Activated CD4-positive, alpha-beta T cell treated with anti-CD3 and anti-CD28 coated beads for 36 hours (primary cell): ENCODE measurements at regions of chr6 and their contacts with region 1.

Region 1: DNA sequence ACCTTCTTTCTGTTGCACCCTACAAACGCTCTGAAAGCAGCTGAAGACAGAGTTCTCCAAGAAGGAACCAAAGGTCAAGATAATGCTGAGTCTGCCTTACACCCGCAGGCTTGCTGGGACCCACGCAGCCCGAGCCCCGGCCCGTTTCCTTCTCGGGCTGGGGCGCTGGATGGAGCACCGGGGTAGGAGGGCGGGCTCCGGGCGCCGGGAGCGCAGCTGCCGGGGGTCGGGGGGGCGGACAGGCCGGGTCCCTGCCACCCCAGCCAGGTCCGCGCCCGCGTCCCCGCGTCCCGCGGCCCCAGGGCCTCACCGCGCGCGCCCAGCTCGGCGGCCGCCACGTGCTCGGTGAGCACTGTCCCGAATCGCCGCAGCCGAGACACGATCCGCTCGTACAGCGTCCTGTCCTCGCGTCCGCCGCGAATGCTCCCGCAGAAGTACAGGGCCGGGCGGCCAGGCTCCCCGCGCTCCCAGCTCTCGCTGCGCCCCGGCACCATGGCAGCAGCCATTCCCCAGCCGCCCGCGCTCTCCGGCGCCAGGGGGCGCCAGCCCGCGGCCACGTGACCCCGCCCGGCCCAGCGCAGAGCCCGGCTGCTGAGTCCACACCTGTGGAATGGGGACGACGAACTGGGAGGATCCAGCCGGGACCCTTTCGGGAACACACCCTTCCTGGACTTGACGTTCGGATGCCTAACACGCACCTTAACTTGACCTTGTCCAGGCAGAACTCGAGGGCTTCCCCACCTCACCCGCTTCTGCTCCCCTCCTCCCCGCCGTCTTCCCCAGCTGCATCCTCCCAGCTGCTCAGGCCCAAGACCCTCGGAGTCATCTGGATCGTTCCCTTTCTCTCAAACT is at the start of gene DNPH1:
- DNase-seq: peak; percentile 88
- ATAC-seq: peak; percentile 82
- H3K4me3 Mint-ChIP-seq: peak within 1 kb of the TSS; percentile 92
- H3K27ac Mint-ChIP-seq: peak within 1 kb of the TSS; percentile 91
- H3K4me1 Mint-ChIP-seq: peaks cover 41% of the 10 kb centered on the region
- H3K27me3 Mint-ChIP-seq: peaks cover 2% of the 10 kb centered on the region
- total RNA-seq, gene DNPH1: 58.5 to 80.3 TPM

Region 2: DNA sequence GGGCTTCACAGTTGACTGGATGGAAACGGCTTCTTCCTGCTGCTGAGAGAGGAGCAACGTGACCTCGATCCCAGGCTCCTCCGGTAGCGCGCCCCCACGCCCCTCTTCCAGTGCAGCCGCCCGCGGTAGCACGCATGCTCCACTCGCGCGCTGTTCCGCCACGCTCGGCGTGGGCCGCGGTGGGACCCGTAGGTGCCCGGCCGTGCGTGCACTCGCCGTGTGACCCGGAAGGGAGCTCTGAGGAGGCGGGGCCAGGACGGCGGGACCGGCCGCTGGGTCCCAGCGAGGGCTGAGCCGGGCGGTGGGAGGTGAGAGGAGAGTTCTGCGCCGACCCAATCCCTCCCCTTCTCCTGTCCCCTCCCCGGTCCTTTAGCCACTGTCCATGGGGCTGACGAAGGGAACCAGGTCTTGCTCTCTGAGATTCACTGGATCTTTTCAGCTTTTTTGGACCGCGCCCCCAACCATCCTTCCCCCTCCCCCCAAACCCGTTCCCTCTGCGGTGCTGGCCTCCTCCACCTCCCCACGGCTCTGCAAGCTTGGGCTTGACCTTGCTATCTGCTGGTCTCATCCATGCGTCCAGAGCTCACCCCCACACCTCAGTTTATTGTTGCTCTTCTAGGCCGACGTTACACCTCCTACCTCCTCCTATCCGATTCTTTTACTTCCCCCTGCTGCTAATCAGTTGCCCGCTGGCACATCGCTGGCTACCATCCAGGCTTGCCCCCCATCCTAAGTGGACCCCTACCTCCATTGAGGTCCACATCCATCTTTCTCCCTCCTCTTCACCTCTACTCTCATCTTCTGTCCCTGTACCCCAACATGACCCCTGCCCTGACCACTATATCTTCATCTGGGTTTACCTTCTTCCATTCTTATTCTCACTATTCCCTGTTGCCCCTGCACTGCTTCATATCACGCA is 47.0 kb before region 1 on chr6 and contains the start of gene CUL9:
- CTCF ChIA-PET with region 1: interaction called, 3 read pairs
- POLR2A ChIA-PET with region 1: no interaction called
- intact Hi-C with region 1: loop called in 1 of 2 experiments (anchors 2 kb)
- DNase-seq: peak; percentile 90
- ATAC-seq: peak; percentile 95
- H3K4me3 Mint-ChIP-seq: peak within 1 kb of the TSS; percentile 90
- H3K27ac Mint-ChIP-seq: peak within 1 kb of the TSS; percentile 91
- H3K4me1 Mint-ChIP-seq: peaks cover 46% of the 10 kb centered on the region
- H3K27me3 Mint-ChIP-seq: no peaks in the 10 kb centered on the region
- total RNA-seq, gene CUL9: 34.0 to 35.1 TPM

Region 3: GRCh38 chr6:43240950-43241349 is 11.8 kb after region 1 on chr6:
- CTCF ChIA-PET with region 1: interaction called, 17 read pairs
- POLR2A ChIA-PET with region 1: no interaction called
- intact Hi-C with region 1: loop called in 1 of 2 experiments (anchors 2 kb)
- DNase-seq: no peak
- ATAC-seq: no peak
- H3K4me3 Mint-ChIP-seq: no peak overlapping the region
- H3K27ac Mint-ChIP-seq: no peak overlapping the region
- H3K4me1 Mint-ChIP-seq: peaks cover 2% of the 10 kb centered on the region
- H3K27me3 Mint-ChIP-seq: peaks cover 18% of the 10 kb centered on the region

Region 4: DNA sequence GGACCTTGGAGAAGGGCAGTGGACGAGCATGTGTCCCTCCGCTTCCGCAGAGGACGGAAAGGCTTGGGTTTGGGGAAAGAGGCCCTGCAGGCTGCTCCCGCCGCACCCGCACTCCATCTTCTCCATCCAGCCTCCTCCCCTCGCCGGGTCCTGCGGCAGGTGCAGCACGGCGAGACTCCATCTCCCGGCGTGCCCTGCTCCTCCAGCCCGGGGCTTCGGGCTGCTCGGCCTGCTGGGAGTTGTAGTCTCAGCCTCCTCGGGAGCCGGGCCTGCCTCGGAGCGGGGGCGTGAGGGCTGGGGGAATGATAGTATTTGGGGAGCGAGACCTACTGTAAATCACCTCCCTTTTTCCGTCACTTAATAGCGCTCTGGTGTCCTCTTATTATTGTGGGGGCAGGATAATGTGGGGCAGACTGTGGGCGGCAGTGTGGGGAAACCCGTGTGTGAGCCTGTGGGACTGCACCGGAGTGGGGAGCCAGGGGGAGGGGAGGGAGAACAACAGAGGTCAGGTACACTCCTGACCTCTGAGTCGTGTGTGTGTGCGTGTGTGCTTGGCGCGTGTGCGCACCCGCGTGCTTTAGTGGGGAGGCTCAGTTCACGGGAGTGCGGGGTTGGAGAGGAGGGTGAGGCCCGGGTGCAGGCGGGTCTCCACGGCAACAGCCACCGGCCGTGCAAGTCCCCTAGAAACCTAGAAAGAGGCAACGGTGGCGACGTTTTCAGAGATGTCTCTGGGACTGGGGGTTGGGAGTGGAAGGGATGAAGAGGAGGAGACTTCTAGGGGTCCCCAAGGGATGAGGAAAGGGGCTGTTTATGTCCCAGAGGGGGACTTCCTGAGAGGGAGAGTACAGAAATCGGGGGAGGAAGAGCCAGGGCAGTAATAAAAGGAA is 18.2 kb after region 1 on chr6:
- CTCF ChIA-PET with region 1: interaction called, 8 read pairs
- POLR2A ChIA-PET with region 1: no interaction called
- intact Hi-C with region 1: loop called (anchors 1 to 2 kb)
- DNase-seq: peak; percentile 94
- ATAC-seq: peak; percentile 99
- H3K4me3 Mint-ChIP-seq: peak overlapping the region; percentile 68
- H3K27ac Mint-ChIP-seq: peak overlapping the region; percentile 62
- H3K4me1 Mint-ChIP-seq: peaks cover 25% of the 10 kb centered on the region
- H3K27me3 Mint-ChIP-seq: peaks cover 14% of the 10 kb centered on the region

Region 5: DNA sequence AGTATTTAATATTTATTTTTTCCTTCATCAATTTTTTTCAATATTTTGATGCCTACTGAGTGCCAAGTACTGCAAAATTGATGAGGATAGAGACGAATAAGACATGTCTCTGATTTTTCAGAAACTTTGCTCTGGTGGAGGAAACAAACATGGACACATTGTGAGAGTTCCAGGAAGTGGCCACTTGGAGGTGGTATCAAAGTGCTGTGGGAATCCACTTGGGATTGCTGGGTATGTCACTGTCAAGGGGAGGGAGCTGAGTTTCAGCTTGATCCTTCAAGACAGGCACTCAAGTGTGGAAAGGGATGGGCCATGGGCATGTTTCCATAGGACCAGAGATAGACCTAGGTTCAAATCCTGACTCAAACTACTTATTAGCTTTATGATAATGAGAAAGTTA is 173.6 kb after region 1 on chr6:
- CTCF ChIA-PET with region 1: interaction called, 13 read pairs
- POLR2A ChIA-PET with region 1: no interaction called
- intact Hi-C with region 1: no loop called
- DNase-seq: no peak
- ATAC-seq: no peak
- H3K4me3 Mint-ChIP-seq: no peak overlapping the region
- H3K27ac Mint-ChIP-seq: no peak overlapping the region
- H3K4me1 Mint-ChIP-seq: no peaks in the 10 kb centered on the region
- H3K27me3 Mint-ChIP-seq: peaks cover 3% of the 10 kb centered on the region

Region 6: DNA sequence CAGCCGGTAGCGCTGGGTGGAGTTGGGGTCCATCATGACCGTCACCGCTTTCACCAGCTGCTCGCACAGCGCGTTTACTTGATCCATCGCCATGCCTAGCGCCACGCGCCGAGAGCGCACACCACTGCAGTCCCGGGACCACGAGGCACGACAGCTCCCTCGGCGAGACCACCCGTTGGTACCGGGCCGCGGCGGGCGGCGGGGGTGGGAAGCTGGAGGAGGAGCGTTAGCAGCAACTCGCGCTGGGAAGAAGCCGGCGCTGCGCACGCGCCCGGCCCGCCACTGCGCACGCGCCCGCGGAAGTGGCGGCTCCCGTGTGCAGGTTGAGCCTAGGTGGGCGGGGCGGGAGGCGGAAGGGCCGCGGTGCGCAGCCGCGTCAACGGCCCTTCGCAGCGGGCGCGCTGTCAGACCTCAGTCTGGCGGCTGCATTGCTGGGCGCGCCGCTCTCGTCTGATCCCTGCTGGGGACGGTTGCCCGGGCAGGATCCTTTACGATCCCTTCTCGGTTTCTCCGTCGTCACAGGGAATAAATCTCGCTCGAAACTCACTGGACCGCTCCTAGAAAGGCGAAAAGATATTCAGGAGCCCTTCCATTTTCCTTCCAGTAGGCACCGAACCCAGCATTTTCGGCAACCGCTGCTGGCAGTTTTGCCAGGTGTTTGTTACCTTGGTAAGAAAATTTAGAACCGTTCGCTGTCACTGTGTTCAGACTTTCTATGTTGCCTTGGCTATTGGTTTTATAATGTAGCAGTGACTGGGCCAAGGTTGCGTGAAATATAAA is 346.8 kb after region 1 on chr6 and contains the starts of genes POLH and XPO5:
- CTCF ChIA-PET with region 1: no interaction called
- POLR2A ChIA-PET with region 1: no interaction called
- intact Hi-C with region 1: loop called in 1 of 2 experiments (anchors 2 kb)
- DNase-seq: peak; percentile 95
- ATAC-seq: peak; percentile 91
- H3K4me3 Mint-ChIP-seq: peak within 1 kb of the TSS; percentile 90
- H3K27ac Mint-ChIP-seq: peak within 1 kb of the TSS; percentile 86
- H3K4me1 Mint-ChIP-seq: peaks cover 44% of the 10 kb centered on the region
- H3K27me3 Mint-ChIP-seq: no peaks in the 10 kb centered on the region
- total RNA-seq, gene POLH: 35.2 to 37.9 TPM
- total RNA-seq, gene XPO5: 108 to 109 TPM